ENCODE measurements at regions of chr15 and their contacts with region 1.

Region 1: GRCh38 chr15:93030430-93031105 is 58.4 kb downstream of the RGMA start:
- DNase-seq: peak; percentile 47
- ATAC-seq: peak; percentile 83
- H3K4me3 ChIP-seq: no peak overlapping the region
- H3K27ac ChIP-seq: no peak overlapping the region
- H3K4me1 ChIP-seq: peaks cover 22% of the 10 kb centered on the region
- H3K27me3 ChIP-seq: no peaks in the 10 kb centered on the region
- CTCF ChIP-seq: peak; percentile 79
- POLR2A ChIP-seq: no peak
- RAD21 ChIP-seq: peak; percentile 81

Region 2: GRCh38 chr15:93072411-93073394 is 42.1 kb after region 1 on chr15:
- CTCF ChIA-PET with region 1: no interaction called
- POLR2A ChIA-PET with region 1: no interaction called
- dilution Hi-C with region 1: no loop called
- in situ Hi-C with region 1: no loop called
- intact Hi-C with region 1: loop called (anchors 2 kb)
- DNase-seq: peak; percentile 23
- ATAC-seq: peak; percentile 94
- H3K4me3 ChIP-seq: peak overlapping the region; percentile 56
- H3K27ac ChIP-seq: no peak overlapping the region
- H3K4me1 ChIP-seq: no peaks in the 10 kb centered on the region; the same call in 1 of the 2 replicates
- H3K27me3 ChIP-seq: peaks cover 46% of the 10 kb centered on the region
- CTCF ChIP-seq: no peak
- POLR2A ChIP-seq: no peak
- RAD21 ChIP-seq: no peak

Region 3: DNA sequence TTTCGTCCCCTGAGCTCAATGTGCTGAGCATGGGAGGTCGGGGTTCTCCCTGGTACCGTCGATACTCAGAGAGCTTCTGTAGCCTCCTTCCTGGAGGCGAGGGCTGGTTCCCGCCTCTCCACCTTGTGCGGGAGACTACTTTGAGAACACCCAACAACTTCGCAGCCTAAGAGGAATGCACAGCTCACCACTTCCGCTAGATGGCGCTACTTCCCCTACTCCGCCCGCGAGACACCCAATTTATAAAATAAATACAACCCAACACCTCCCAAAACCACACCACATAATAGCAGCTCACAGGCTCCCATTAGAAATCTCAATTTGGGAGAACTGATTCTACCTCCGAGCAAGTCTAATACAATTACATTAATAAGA is 57.2 kb after region 1 on chr15:
- CTCF ChIA-PET with region 1: no interaction called
- POLR2A ChIA-PET with region 1: no interaction called
- dilution Hi-C with region 1: no loop called
- in situ Hi-C with region 1: no loop called
- intact Hi-C with region 1: no loop called
- DNase-seq: peak; percentile 5
- ATAC-seq: peak; percentile 59
- H3K4me3 ChIP-seq: no peak overlapping the region
- H3K27ac ChIP-seq: no peak overlapping the region
- H3K4me1 ChIP-seq: no peaks in the 10 kb centered on the region
- H3K27me3 ChIP-seq: peaks cover 59% of the 10 kb centered on the region
- CTCF ChIP-seq: peak; percentile 62
- POLR2A ChIP-seq: no peak
- RAD21 ChIP-seq: peak; percentile 51

Region 4: GRCh38 chr15:93997084-93997918 is 966.7 kb after region 1 on chr15:
- CTCF ChIA-PET with region 1: no interaction called
- POLR2A ChIA-PET with region 1: no interaction called
- dilution Hi-C with region 1: no loop called
- in situ Hi-C with region 1: loop called (anchors 10 kb)
- intact Hi-C with region 1: loop called (anchors 10 kb)
- DNase-seq: peak; percentile 4
- ATAC-seq: no peak
- H3K4me3 ChIP-seq: no peak overlapping the region
- H3K27ac ChIP-seq: no peak overlapping the region
- H3K4me1 ChIP-seq: no peaks in the 10 kb centered on the region
- H3K27me3 ChIP-seq: no peaks in the 10 kb centered on the region
- CTCF ChIP-seq: peak; percentile 55
- POLR2A ChIP-seq: no peak
- RAD21 ChIP-seq: peak; percentile 52

Region 5: GRCh38 chr15:94119923-94120775 is 1089.6 kb after region 1 on chr15:
- CTCF ChIA-PET with region 1: interaction called, 20 read pairs
- POLR2A ChIA-PET with region 1: no interaction called
- dilution Hi-C with region 1: no loop called
- in situ Hi-C with region 1: loop called (anchors 5 kb)
- intact Hi-C with region 1: loop called (anchors 1 kb)
- DNase-seq: peak; percentile 82
- ATAC-seq: peak; percentile 92
- H3K4me3 ChIP-seq: no peak overlapping the region
- H3K27ac ChIP-seq: no peak overlapping the region
- H3K4me1 ChIP-seq: no peaks in the 10 kb centered on the region
- H3K27me3 ChIP-seq: no peaks in the 10 kb centered on the region
- CTCF ChIP-seq: peak; percentile 99
- POLR2A ChIP-seq: no peak
- RAD21 ChIP-seq: peak; percentile 91

Region 6: DNA sequence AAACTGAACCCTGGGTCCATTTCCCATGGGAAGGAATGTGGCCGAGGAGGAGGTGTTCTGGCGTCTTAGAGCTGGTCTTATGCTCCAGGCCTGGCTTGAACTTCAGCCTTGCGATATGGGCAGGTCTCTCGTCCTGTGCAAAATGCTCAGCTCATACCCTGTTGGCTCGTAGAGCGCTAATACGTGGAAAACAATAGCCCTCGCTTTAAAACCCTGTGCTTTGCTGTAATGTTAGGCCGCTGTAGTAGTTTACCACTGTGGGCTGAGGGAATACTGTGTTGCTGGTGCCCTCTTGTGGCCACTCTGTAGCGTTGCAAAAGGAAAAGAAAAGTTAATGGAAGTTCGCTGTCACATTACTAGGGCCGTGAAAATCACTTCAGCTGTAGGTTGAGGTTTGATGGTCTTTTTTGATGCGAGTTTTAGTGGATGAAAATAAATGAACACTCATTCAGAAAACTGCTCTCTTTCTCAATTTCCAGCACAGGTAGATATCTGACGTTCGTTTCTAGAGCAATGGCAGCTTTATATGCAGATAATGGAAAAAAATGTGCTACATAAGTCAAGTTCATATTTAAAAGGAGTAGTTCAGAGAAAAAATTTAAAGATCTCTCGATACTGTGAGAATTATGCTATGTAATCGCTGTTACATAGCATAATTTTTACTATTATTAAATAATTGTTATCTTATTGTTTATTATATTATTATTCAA is 1293.7 kb after region 1 on chr15:
- CTCF ChIA-PET with region 1: interaction called, 3 read pairs
- POLR2A ChIA-PET with region 1: no interaction called
- dilution Hi-C with region 1: no loop called
- in situ Hi-C with region 1: loop called (anchors 10 kb)
- intact Hi-C with region 1: loop called (anchors 1 kb)
- DNase-seq: peak; percentile 65
- ATAC-seq: peak; percentile 97
- H3K4me3 ChIP-seq: no peak overlapping the region
- H3K27ac ChIP-seq: no peak overlapping the region
- H3K4me1 ChIP-seq: no peaks in the 10 kb centered on the region
- H3K27me3 ChIP-seq: no peaks in the 10 kb centered on the region
- CTCF ChIP-seq: peak; percentile 92
- POLR2A ChIP-seq: no peak
- RAD21 ChIP-seq: peak; percentile 93